Posterior vena cava (tissue), 2 donors: ENCODE measurements at regions of chr2 and their contacts with region 1.

Region 1: DNA sequence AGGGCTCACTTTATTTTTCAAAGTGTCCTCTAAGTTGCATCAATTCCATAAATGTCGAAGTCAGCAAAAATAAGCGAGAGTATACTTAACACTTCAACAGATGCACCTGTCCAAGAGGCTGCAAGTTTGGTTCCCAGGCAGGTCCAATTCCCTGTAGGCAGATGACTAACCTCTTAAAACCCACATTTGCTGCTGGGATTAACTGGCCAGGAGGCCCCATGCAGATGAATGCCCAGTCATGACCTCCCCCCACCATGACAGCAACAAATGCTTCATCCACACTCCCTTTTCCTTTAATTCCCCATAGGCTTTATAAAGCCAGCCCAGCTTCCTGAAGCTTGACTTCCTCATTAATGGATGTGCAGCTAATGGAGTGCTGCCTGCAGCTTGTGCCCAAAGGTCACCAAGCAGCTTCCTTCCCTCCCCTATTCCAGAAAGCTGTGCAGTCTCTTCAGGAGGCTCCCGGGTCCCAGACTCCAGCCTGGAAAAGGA is 35.7 kb downstream of the REEP1 start:
- DNase-seq: no peak

Region 2: DNA sequence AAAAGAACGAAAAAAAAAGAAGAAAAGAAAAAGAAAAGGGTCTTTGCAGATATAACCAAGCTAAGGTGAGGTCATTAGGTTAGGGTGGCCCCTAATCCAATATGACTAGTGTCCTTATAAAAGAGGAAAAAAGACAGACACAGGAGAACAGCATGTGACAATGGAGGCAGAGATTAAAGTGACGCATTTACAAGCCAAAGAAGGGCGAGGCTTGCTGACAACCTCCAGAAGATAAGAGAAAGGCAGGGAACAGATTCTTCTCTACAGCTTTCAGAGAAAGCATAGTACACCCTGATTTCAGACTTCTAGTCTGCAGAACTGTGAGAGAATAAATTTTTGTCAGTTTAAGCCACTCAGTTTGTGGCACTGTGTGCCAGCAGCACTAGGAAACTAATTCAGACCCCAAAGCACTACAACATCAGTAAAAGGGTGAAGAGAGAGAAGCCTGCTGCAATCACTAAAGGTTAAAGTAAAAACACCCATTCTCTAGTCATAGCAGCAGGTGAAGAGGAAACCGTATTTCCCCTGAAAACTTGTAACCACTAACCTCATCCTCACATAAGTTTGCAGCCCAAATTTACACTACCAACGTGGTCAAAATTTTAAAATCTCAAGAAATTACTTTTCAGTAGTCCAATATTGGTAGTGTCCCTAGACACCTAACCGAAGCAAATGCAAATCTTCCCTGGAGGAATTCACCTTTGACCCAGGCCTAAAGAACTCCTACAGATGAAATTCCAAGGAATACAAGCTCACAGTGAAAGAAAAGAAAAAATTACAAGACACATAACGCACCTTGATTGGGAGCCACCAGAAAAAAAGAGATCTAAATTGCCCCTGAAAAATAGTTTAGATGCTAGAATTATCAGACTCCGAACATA is 18.2 kb after region 1 on chr2:
- intact Hi-C with region 1: no loop called
- DNase-seq: no peak

Region 3: GRCh38 chr2:86337244-86337836 is 35.6 kb after region 1 on chr2 and contains the start of gene REEP1:
- intact Hi-C with region 1: loop called in 1 of 2 experiments (anchors 5 kb)
- DNase-seq: no peak
- total RNA-seq, gene REEP1: 48.4 to 55.2 TPM

Region 4: DNA sequence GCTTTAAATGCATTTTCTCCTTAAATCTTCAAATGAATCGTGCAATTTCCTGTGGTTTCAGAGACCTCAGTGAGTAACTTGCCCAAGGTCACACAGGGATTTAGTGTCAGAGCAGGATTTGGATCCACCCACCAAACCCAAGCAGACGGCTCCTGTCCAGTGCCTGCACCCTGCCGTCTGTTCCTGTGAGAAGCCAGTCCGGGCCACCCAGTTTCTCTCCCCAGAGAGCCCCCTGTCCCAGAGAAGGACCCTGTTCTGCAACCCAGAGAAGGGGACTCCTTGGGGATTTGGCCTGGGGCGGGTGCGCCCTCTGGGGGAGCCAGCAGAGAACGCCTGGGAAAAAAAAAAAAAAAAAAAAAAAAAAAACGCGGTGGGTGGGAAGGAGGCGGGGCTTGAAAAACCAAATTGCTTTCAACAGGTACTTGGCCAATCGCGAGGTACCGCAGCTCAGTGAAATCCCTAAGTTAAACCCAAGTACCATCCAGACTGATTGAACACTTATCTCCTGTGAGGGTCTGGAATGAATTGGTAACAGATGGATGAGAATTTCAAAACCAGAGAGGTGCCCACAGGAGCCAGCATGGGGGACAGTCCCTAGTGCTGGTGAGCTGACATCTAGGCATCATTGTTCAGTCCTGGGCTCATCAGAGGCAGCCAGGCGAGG is 66.5 kb after region 1 on chr2:
- intact Hi-C with region 1: loop called in 1 of 2 experiments (anchors 10 kb)
- DNase-seq: no peak

Region 5: GRCh38 chr2:88269661-88270235 is 1968.0 kb after region 1 on chr2:
- intact Hi-C with region 1: no loop called
- DNase-seq: no peak